GM18951 (cell line): ENCODE measurements at regions of chr18 and their contacts with region 1.

Region 1: GRCh38 chr18:27605107-27605834 is 420.2 kb upstream of the CHST9 start:
- POLR2A ChIP-seq: no peak

Region 2: GRCh38 chr18:28176933-28177827 is 571.9 kb after region 1 on chr18 and contains the start of gene CDH2:
- in situ Hi-C with region 1: loop called (anchors 25 kb)
- POLR2A ChIP-seq: no peak